AG04449 (cell line): ENCODE measurements at regions of chr6 and their contacts with region 1.

Region 1: GRCh38 chr6:26596579-26597388 is at the start of gene ABT1:
- DNase-seq: peak; percentile 85
- H3K4me3 ChIP-seq: peak within 1 kb of the TSS; percentile 100
- CTCF ChIP-seq: no peak

Region 2: DNA sequence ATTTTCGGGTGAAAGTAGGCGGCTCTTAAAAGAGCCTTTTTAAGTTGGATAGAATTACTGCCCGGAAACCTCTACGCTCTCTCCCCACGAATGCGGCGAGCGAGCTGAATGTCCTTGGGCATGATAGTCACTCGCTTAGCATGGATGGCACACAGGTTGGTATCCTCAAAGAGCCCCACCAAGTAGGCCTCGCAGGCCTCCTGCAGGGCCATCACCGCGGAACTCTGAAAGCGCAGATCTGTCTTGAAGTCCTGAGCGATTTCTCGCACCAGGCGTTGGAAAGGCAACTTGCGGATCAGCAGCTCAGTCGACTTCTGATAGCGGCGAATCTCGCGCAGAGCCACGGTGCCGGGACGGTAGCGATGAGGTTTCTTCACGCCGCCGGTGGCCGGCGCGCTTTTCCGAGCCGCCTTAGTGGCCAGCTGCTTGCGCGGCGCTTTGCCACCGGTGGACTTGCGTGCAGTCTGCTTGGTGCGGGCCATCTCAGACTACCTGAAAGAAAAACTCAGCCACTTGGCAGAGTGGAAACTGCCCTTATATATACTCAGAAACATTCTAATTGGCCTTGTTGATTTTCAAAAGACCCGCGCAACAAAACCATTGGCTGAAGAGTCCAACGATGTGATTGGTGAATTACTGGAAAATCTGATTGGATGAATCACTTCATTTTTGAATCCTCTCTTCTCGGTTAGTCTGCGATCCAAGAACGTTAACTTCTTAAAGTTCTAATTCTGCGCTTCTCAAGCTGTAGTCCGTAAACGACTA is 325.7 kb before region 1 on chr6:
- CTCF ChIA-PET with region 1: interaction called, 14 read pairs
- POLR2A ChIA-PET with region 1: no interaction called
- DNase-seq: no peak
- H3K4me3 ChIP-seq: peak overlapping the region; percentile 63
- CTCF ChIP-seq: no peak

Region 3: GRCh38 chr6:26322645-26323482 is 273.9 kb before region 1 on chr6:
- CTCF ChIA-PET with region 1: interaction called, 49 read pairs
- POLR2A ChIA-PET with region 1: interaction called, 3 read pairs
- DNase-seq: peak; percentile 88
- H3K4me3 ChIP-seq: peak overlapping the region; percentile 76
- CTCF ChIP-seq: no peak

Region 4: GRCh38 chr6:26351544-26351953 is 245.2 kb before region 1 on chr6:
- CTCF ChIA-PET with region 1: interaction called, 183 read pairs
- POLR2A ChIA-PET with region 1: no interaction called
- DNase-seq: peak; percentile 85
- H3K4me3 ChIP-seq: no peak overlapping the region
- CTCF ChIP-seq: no peak

Region 5: DNA sequence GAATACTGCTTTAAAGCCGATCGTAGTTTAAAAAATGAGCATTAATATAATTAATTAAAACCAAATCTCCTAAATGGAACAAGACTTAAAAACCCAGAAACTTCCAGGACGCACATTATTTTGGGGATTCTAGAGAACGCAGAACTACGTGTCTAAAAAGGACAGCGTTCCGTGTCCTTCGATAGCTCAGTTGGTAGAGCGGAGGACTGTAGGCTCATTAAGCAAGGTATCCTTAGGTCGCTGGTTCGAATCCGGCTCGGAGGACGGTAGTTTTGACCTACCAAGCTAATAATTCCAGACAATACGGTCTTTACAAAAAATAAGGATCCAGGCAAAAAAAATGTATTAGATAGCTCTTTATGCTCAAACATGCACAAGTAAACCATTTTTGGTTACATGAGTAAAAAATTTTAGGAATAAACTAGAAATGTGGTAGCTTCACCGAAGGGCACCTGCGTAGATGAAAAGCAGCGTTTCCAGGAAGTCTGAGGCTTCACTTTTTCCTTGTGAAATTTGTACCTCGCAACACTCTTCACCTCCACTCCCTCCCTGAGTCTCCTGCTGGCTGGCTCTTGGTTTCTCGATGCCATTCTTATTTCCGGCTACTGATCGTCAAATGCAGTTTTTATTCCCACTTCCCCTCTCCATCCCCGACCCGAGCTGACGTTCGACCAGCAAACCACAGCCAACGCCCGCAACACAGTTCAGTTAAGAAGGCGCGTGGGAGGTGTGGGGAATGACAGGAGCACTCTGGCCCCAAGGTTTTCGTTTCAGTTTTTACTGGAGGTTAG is 19.7 kb before region 1 on chr6:
- CTCF ChIA-PET with region 1: interaction called, 380 read pairs
- POLR2A ChIA-PET with region 1: interaction called, 10 read pairs
- DNase-seq: no peak
- H3K4me3 ChIP-seq: peak overlapping the region; percentile 60
- CTCF ChIP-seq: no peak

Region 6: DNA sequence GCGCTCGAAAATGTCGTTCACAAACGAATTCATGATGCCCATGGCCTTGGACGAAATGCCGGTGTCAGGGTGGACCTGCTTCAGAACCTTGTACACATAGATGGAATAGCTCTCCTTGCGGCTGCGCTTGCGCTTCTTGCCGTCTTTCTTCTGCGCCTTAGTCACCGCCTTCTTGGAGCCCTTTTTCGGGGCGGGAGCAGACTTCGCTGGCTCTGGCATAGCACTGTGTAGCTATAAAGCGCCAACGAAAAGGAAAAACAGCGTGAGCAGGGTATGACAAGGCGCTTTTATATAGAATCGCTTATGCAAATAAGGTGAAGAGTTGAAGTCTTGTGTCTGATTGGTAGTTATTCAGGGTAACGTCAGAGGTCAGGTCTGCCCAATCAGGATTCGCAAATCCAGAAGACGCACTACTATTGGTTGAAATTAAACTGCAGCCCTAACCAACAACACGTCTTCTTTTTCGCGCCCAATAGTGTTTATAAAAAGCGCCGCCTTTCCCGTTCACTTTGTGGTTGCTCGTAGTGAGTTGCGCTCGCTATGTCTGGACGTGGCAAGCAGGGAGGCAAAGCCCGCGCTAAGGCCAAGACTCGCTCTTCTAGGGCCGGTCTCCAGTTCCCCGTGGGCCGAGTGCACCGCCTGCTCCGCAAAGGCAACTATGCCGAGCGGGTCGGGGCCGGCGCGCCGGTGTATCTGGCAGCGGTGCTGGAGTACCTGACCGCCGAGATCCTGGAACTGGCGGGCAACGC is 535.9 kb after region 1 on chr6:
- CTCF ChIA-PET with region 1: interaction called, 13 read pairs
- POLR2A ChIA-PET with region 1: interaction called, 4 read pairs
- DNase-seq: peak; percentile 100
- H3K4me3 ChIP-seq: peak overlapping the region; percentile 65
- CTCF ChIP-seq: no peak